Heart left ventricle (tissue), 16 donors: ENCODE measurements at regions of chr4 and their contacts with region 1.

Region 1: DNA sequence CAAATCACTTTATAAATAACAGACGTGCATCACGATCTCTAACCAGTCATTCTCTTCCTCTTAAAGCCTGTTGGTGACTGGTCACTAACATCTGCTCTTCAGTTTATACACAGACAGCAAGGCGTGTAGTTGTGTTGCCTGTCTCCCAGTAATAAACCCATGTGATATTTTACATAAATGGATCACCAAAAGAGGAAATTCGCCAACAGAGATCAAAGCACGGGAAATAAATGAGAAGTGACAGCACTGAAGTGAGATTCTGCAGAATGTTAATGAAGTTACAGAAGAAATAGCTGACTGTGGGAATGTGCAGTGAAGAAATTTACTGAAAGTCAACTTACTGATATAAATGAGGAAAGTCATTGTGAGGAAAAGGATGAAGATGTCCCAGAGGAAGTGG is 47.0 kb downstream of the AFF1 start:
- DNase-seq: no peak
- ATAC-seq: peak; percentile 22 to 80 (median 64)
- H3K4me3 ChIP-seq: no peak overlapping the region
- H3K27ac ChIP-seq: peak overlapping the region in 2 of 12 donors; percentile 42 to 87
- H3K4me1 ChIP-seq: peaks cover 0 to 29% (median 0%) of the 10 kb centered on the region in 12 donors
- H3K27me3 ChIP-seq: no peaks in the 10 kb centered on the region
- CTCF ChIP-seq: no peak
- POLR2A ChIP-seq: no peak

Region 2: GRCh38 chr4:86730310-86730709 is 251.5 kb before region 1 on chr4:
- intact Hi-C with region 1: no loop called
- DNase-seq: peak in 2 of 5 donors; percentile 12 to 56
- ATAC-seq: no peak
- H3K4me3 ChIP-seq: no peak overlapping the region
- H3K27ac ChIP-seq: no peak overlapping the region
- H3K4me1 ChIP-seq: no peaks in the 10 kb centered on the region
- H3K27me3 ChIP-seq: no peaks in the 10 kb centered on the region
- CTCF ChIP-seq: no peak
- POLR2A ChIP-seq: no peak

Region 3: DNA sequence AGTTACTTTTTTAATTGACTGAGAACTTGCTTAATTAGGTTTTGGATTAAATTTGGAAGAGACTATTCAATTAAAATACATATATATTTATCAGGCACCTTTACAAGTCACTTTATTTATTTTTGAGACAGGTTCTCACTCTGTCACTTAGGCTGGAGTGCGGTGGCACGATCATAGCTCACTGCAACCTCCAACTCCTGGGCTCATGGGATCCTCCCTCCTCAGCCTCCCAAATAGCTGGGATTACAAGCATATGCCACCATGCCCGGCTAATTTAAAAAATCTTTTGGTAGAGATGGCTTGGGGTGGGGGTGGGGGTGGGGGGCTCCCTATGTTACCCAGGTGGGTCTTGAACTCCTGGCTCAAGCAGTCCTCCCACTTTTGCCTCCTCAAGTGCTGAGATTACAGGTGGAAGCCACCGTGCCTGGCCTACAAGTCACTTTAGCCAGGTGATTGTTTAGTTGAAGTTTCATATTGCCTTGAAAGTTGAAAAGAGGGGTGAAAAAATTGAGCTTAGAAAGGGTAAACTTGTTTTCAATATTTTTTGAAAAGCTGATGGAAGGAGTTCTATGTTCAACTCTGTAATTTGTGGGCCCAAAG is 44.2 kb before region 1 on chr4:
- intact Hi-C with region 1: no loop called
- DNase-seq: no peak
- ATAC-seq: no peak
- H3K4me3 ChIP-seq: peak overlapping the region in 4 of 12 donors; percentile 75 to 96 (median 94)
- H3K27ac ChIP-seq: peak overlapping the region in 3 of 12 donors; percentile 78 to 100 (median 99)
- H3K4me1 ChIP-seq: peaks cover 6 to 68% (median 38%) of the 10 kb centered on the region in 12 donors
- H3K27me3 ChIP-seq: no peaks in the 10 kb centered on the region
- CTCF ChIP-seq: no peak
- POLR2A ChIP-seq: no peak

Region 4: DNA sequence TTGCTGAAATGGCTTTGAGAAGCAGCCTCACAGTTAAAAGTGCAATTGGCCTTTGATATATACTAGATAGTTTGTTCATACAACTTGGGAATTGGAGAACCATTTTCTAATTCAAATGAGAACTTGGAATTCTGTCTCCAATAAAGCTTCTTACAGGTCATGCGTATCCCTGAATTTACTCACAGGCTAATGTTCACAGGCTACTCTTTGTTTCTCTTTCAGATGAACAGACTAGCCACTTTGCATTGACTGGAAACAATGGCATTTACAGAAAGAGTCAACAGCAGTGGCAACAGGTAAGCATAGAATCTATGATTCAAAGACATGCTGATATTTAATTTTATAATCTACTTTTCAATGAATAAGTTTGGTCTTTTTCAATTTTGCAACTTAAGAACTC is 33.5 kb before region 1 on chr4:
- intact Hi-C with region 1: loop called in 1 of 10 experiments (anchors 5 kb)
- DNase-seq: no peak
- ATAC-seq: no peak
- H3K4me3 ChIP-seq: no peak overlapping the region
- H3K27ac ChIP-seq: no peak overlapping the region
- H3K4me1 ChIP-seq: peaks cover 0 to 45% (median 20%) of the 10 kb centered on the region in 12 donors
- H3K27me3 ChIP-seq: no peaks in the 10 kb centered on the region
- CTCF ChIP-seq: no peak
- POLR2A ChIP-seq: no peak